GM18951 (cell line): ENCODE measurements at regions of chr17 and their contacts with region 1.

Region 1: GRCh38 chr17:28500712-28501379 is 5.3 kb upstream of the FOXN1 start:
- POLR2A ChIP-seq: peak; percentile 44

Region 2: GRCh38 chr17:28536532-28537238 is 35.8 kb after region 1 on chr17:
- in situ Hi-C with region 1: loop called (anchors 5 kb)
- POLR2A ChIP-seq: no peak